ENCODE measurements at regions of chrX and their contacts with region 1.

Region 1: GRCh38 chrX:134718105-134718965 is 60.1 kb upstream of the PLAC1 start:
- DNase-seq: peak; percentile 94
- H3K4me3 ChIP-seq: no peak overlapping the region
- H3K27ac ChIP-seq: peak overlapping the region; percentile 89
- H3K4me1 ChIP-seq: peaks cover 21% of the 10 kb centered on the region
- H3K27me3 ChIP-seq: no peaks in the 10 kb centered on the region
- CTCF ChIP-seq: no peak
- POLR2A ChIP-seq: no peak

Region 2: DNA sequence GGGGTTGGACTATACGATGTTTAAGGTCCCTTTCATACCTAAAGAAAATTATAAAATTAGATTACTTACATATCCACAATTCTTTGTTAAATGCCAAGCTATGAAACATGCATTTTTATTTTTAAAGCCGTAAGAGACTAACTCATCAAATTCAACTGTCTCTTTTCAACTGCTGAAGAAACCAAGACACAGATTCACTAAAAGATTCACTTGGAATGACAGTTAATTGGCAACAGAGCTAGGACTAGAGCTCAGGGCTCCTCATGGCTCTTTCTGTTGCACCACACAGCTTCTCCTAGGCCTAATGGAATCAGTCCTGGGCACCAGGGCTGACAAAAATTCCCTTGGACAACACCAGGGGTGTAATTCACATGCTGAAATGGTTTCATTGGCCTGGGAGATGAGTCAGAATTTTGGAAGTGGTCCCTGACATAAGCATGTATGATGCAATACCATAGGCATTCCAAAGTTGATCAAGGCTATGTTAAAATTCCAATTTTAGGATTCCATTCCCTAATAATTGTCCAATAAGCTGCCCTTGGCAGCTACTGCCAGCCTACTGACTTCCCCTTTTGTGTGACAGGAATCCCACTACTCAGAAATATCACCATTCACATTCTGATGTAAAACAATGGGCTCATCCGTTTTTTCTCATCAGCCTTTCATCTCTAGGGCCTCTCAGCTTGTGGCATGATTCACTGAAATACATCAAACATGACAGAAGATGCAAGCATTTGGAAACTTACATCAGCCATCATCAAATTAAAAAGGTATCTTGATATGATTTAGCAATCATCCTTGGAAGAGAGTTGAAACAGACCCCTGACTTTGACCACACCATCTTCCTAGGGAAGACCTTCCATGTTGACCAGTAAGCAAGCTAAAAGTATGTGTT is 114.3 kb before region 1 on chrX:
- CTCF ChIA-PET with region 1: no interaction called
- POLR2A ChIA-PET with region 1: interaction called, 3 read pairs
- dilution Hi-C with region 1: no loop called
- intact Hi-C with region 1: loop called (anchors 5 kb)
- DNase-seq: peak; percentile 12
- H3K4me3 ChIP-seq: no peak overlapping the region
- H3K27ac ChIP-seq: peak overlapping the region; percentile 15
- H3K4me1 ChIP-seq: peaks cover 10% of the 10 kb centered on the region
- H3K27me3 ChIP-seq: no peaks in the 10 kb centered on the region
- CTCF ChIP-seq: no peak
- POLR2A ChIP-seq: no peak

Region 3: DNA sequence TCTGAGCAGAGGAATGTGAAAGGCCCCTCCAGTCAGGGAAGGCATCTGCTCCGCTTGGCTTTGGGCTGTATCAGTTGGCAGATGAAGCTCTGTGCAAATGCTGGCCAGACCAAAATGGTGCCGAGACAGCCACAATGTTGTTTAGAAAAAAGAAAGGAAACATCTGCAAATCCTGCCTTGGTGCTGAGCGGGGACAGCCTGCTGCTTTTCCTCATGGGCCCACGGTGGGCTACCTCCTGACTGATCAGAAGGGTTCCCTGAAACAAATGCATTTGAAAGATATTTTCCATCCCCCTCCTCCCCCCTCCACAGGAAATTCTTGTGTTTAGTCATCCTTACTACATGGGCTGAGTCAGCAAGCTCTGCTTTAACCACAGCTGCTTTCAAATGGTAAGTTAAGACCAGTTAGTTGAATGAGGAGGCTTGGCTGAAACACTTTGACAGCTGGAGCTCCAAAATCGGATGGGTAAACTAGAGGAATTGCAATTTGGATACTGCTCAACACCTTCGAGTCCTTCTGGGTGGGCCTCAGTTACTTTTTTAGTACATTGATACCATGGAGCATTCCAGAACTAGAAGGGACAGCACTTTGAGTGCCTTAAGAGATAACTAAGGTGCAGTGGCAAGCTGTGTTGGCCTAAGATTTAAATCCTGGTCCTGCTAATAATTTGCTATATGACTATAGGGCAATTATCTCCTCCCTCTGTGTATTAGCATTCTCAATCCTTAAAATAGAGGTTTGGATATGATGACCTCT is 96.1 kb before region 1 on chrX:
- CTCF ChIA-PET with region 1: no interaction called
- POLR2A ChIA-PET with region 1: no interaction called
- dilution Hi-C with region 1: no loop called
- intact Hi-C with region 1: loop called (anchors 1 kb)
- DNase-seq: peak; percentile 92
- H3K4me3 ChIP-seq: peak overlapping the region in 1 of 3 experiments; percentile 10
- H3K27ac ChIP-seq: peak overlapping the region; percentile 94
- H3K4me1 ChIP-seq: peaks cover 49% of the 10 kb centered on the region
- H3K27me3 ChIP-seq: no peaks in the 10 kb centered on the region
- CTCF ChIP-seq: no peak
- POLR2A ChIP-seq: no peak

Region 4: GRCh38 chrX:134670134-134670924 is 48.0 kb before region 1 on chrX:
- CTCF ChIA-PET with region 1: no interaction called
- POLR2A ChIA-PET with region 1: no interaction called
- dilution Hi-C with region 1: no loop called
- intact Hi-C with region 1: loop called (anchors 1 kb)
- DNase-seq: peak; percentile 29
- H3K4me3 ChIP-seq: no peak overlapping the region
- H3K27ac ChIP-seq: peak overlapping the region; percentile 87
- H3K4me1 ChIP-seq: peaks cover 27% of the 10 kb centered on the region
- H3K27me3 ChIP-seq: no peaks in the 10 kb centered on the region
- CTCF ChIP-seq: no peak
- POLR2A ChIP-seq: no peak

Region 5: DNA sequence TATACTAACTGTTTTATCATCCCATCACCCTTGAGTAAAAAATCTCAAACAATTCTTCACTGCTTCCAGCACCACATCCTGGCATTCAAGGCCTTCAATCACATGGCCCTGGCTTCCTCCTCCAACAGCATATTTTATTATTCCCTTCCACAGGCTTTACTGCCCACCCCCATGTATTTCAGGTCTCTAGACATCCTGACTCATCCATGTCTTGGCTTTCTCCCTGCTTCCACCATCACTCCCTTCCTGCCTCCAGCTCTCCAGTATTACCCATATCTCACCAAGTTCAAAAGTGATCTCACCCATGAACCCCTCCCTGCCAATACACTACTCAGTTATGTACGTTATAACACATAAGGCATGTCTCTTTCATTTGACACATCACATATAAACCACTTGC is 25.3 kb before region 1 on chrX:
- CTCF ChIA-PET with region 1: no interaction called
- POLR2A ChIA-PET with region 1: no interaction called
- dilution Hi-C with region 1: no loop called
- intact Hi-C with region 1: loop called (anchors 2 kb)
- DNase-seq: peak; percentile 68
- H3K4me3 ChIP-seq: no peak overlapping the region
- H3K27ac ChIP-seq: peak overlapping the region; percentile 68
- H3K4me1 ChIP-seq: peaks cover 44% of the 10 kb centered on the region
- H3K27me3 ChIP-seq: no peaks in the 10 kb centered on the region
- CTCF ChIP-seq: no peak
- POLR2A ChIP-seq: no peak

Region 6: DNA sequence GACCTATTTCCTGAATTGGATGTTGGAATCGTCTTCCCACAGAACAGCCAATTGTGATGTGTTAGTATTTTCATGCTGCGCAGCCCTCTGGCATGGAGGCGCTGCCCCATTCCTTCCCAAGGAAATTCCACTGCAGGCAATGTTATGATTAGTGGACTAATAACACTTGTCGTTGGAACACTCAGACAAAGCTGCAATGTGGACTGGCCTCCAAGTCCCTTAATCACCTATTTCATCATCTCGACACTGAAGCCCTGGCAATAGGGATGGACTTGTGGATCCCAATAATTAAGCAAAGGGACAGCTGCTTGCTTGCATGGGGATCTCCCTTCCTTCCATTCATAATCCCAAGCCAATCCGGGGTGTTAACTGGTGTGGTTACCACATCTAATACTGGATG is 18.7 kb after region 1 on chrX:
- CTCF ChIA-PET with region 1: no interaction called
- POLR2A ChIA-PET with region 1: no interaction called
- dilution Hi-C with region 1: no loop called
- intact Hi-C with region 1: loop called (anchors 2 kb)
- DNase-seq: peak; percentile 75
- H3K4me3 ChIP-seq: no peak overlapping the region
- H3K27ac ChIP-seq: no peak overlapping the region
- H3K4me1 ChIP-seq: peaks cover 22% of the 10 kb centered on the region
- H3K27me3 ChIP-seq: no peaks in the 10 kb centered on the region
- CTCF ChIP-seq: no peak
- POLR2A ChIP-seq: no peak

Region 7: GRCh38 chrX:134764212-134764785 is 46.0 kb after region 1 on chrX:
- CTCF ChIA-PET with region 1: no interaction called
- POLR2A ChIA-PET with region 1: no interaction called
- dilution Hi-C with region 1: no loop called
- intact Hi-C with region 1: loop called (anchors 5 kb)
- DNase-seq: peak; percentile 41
- H3K4me3 ChIP-seq: no peak overlapping the region
- H3K27ac ChIP-seq: no peak overlapping the region
- H3K4me1 ChIP-seq: no peaks in the 10 kb centered on the region
- H3K27me3 ChIP-seq: no peaks in the 10 kb centered on the region
- CTCF ChIP-seq: peak in 1 of 2 donors; percentile 13
- POLR2A ChIP-seq: no peak

Measured in endothelial cell of umbilical vein (primary cell).